ENCODE measurements at regions of chr12 and their contacts with region 1.

Region 1: DNA sequence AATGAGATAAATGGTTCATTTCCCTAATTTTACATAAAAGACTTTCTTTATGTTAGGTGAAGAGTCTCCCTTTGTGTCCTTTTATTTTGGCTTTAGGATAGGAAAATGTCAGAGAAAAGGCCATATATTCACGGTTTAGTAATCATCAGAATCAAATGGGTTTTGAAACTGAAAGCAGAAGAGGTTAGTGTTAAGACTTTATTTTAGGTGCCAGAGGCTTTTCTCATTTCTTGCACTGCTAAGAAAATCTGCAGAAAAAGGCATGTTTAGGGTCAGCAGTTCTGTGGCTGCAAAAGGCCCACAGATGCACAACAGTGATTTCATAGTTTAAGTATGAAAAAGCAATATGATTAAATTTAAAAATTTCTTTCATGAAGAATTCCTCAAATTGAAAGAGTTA is 80.4 kb upstream of the SINHCAF start:
- DNase-seq: no peak
- H3K27ac ChIP-seq: no peak overlapping the region
- CTCF ChIP-seq: no peak

Region 2: GRCh38 chr12:31280183-31280582 is 126.2 kb before region 1 on chr12:
- CTCF ChIA-PET with region 1: no interaction called
- POLR2A ChIA-PET with region 1: no interaction called
- DNase-seq: no peak
- H3K27ac ChIP-seq: no peak overlapping the region
- CTCF ChIP-seq: no peak

Region 3: DNA sequence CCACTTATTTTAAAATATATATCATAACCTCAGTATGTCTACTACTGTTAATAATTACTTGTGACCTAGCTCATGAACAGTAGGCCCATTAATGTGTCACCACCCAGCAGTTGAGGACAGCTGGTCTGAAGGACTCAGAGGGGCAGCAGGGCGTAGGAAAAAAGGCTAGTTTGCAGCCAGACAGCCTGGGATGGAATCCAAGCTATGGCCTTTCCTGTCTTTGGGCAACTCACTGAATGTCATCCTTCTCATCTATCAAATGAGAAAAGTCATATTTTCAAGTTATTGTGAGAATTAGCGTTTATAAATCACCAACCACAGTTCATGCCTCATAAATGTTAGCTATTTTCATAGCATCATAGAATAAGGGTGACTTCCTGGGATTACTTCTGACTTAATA is 172.3 kb after region 1 on chr12:
- CTCF ChIA-PET with region 1: no interaction called
- POLR2A ChIA-PET with region 1: no interaction called
- DNase-seq: no peak
- H3K27ac ChIP-seq: no peak overlapping the region
- CTCF ChIP-seq: no peak

Region 4: DNA sequence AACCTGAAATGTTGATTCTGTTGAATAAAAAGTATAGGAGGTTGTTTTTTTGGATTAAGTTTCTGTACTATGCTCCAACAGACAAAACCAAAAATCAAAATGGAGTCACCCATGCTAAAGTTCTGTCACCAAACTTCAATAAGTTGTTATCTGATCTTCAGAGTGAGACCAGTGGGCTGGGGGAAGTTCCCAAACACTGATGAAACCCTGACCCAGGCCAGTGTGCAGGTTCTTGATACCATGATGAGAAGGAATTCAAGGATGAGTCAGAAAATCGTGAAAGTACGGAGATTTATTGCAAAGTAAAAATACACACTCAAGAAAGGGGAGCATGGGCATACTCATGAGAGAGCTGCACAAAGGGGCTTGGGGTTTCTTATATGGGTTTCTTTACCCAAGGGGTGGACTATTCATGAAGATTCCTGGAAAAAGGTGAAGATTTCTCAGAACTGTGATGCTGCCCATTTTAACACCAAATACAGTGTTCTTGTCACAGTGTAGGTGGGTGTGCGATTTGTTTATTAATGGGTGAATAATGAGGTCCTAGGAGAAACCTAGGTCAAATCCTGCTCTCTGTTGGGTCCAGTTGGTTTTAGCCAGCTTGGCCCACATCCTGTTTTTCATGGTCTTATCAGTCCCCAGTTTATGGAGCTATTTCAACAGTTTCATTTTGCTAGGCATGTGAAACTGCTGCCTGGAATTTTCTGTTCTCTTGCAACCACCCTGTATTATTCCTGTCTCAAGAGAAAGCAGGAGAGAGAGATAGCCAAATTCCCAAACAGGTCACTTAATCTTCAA is 212.1 kb after region 1 on chr12:
- CTCF ChIA-PET with region 1: interaction called, 11 read pairs
- POLR2A ChIA-PET with region 1: no interaction called
- DNase-seq: no peak
- H3K27ac ChIP-seq: no peak overlapping the region
- CTCF ChIP-seq: no peak

Region 5: DNA sequence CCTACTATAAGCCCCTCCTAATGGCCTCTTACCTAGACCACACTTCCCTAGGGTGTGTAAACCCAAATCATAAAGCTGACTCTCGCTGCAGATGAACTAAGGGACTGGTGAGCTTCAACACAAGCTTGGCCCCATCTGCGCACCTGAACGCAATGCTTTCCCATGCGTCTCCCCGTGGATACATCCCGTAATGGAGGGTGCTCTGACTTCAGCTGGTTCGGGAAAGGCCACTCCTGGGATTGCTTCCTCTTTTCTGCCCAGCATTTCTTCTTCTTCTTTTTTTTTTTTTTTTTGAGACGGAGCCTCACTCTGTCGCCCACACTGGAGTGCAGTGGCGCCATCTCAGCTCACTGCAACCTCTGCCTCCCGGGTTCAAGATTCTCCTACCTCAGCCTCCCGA is 225.4 kb after region 1 on chr12:
- CTCF ChIA-PET with region 1: interaction called, 14 read pairs
- POLR2A ChIA-PET with region 1: no interaction called
- DNase-seq: no peak
- H3K27ac ChIP-seq: no peak overlapping the region
- CTCF ChIP-seq: no peak

Region 6: GRCh38 chr12:31641509-31642090 is 235.3 kb after region 1 on chr12:
- CTCF ChIA-PET with region 1: interaction called, 14 read pairs
- POLR2A ChIA-PET with region 1: no interaction called
- DNase-seq: no peak
- H3K27ac ChIP-seq: no peak overlapping the region
- CTCF ChIP-seq: no peak

Region 7: GRCh38 chr12:31651893-31652521 is 245.7 kb after region 1 on chr12:
- CTCF ChIA-PET with region 1: interaction called, 10 read pairs
- POLR2A ChIA-PET with region 1: no interaction called
- DNase-seq: no peak
- H3K27ac ChIP-seq: no peak overlapping the region
- CTCF ChIP-seq: no peak

Region 8: GRCh38 chr12:31740628-31741027 is 334.3 kb after region 1 on chr12:
- CTCF ChIA-PET with region 1: no interaction called
- POLR2A ChIA-PET with region 1: no interaction called
- DNase-seq: no peak
- H3K27ac ChIP-seq: no peak overlapping the region
- CTCF ChIP-seq: no peak

Measured in RWPE1 (cell line).